Sigmoid colon (tissue), 7 donors: ENCODE measurements at regions of chr6 and their contacts with region 1.

Region 1: GRCh38 chr6:44096612-44097011 is 30.6 kb downstream of the MRPL14 start:
- DNase-seq: peak; percentile 87
- H3K4me3 ChIP-seq: no peak overlapping the region
- H3K27ac ChIP-seq: no peak overlapping the region
- H3K4me1 ChIP-seq: no peaks in the 10 kb centered on the region
- H3K27me3 ChIP-seq: no peaks in the 10 kb centered on the region
- CTCF ChIP-seq: peak; percentile 66 to 87 (median 80)
- EP300 ChIP-seq: no peak
- POLR2A ChIP-seq: no peak

Region 2: GRCh38 chr6:43496370-43497128 is 600.1 kb before region 1 on chr6:
- intact Hi-C with region 1: no loop called
- DNase-seq: no peak
- H3K4me3 ChIP-seq: no peak overlapping the region
- H3K27ac ChIP-seq: peak overlapping the region in 3 of 4 donors; percentile 41 to 45 (median 44)
- H3K4me1 ChIP-seq: peaks cover 0 to 51% (median 45%) of the 10 kb centered on the region in 4 donors
- H3K27me3 ChIP-seq: no peaks in the 10 kb centered on the region
- CTCF ChIP-seq: peak in 3 of 4 experiments; percentile 48 to 62 (median 60)
- EP300 ChIP-seq: no peak
- POLR2A ChIP-seq: no peak

Region 3: GRCh38 chr6:44151348-44152108 is 54.9 kb after region 1 on chr6:
- intact Hi-C with region 1: loop called (anchors 1 kb)
- DNase-seq: peak; percentile 85
- H3K4me3 ChIP-seq: no peak overlapping the region
- H3K27ac ChIP-seq: no peak overlapping the region
- H3K4me1 ChIP-seq: peaks cover 0 to 7% (median 2%) of the 10 kb centered on the region in 4 donors
- H3K27me3 ChIP-seq: no peaks in the 10 kb centered on the region
- CTCF ChIP-seq: peak; percentile 97 to 100 (median 98)
- EP300 ChIP-seq: no peak
- POLR2A ChIP-seq: no peak

Region 4: GRCh38 chr6:44237813-44238433 is 141.3 kb after region 1 on chr6:
- intact Hi-C with region 1: loop called (anchors 10 kb)
- DNase-seq: peak; percentile 91
- H3K4me3 ChIP-seq: peak overlapping the region; percentile 50 to 67 (median 62)
- H3K27ac ChIP-seq: peak overlapping the region; percentile 94 to 98 (median 97)
- H3K4me1 ChIP-seq: peaks cover 0 to 55% (median 50%) of the 10 kb centered on the region in 4 donors
- H3K27me3 ChIP-seq: no peaks in the 10 kb centered on the region
- CTCF ChIP-seq: peak; percentile 98 to 99 (median 98)
- EP300 ChIP-seq: peak in 1 of 4 donors; percentile 23
- POLR2A ChIP-seq: peak in 1 of 2 donors; percentile 24

Region 5: DNA sequence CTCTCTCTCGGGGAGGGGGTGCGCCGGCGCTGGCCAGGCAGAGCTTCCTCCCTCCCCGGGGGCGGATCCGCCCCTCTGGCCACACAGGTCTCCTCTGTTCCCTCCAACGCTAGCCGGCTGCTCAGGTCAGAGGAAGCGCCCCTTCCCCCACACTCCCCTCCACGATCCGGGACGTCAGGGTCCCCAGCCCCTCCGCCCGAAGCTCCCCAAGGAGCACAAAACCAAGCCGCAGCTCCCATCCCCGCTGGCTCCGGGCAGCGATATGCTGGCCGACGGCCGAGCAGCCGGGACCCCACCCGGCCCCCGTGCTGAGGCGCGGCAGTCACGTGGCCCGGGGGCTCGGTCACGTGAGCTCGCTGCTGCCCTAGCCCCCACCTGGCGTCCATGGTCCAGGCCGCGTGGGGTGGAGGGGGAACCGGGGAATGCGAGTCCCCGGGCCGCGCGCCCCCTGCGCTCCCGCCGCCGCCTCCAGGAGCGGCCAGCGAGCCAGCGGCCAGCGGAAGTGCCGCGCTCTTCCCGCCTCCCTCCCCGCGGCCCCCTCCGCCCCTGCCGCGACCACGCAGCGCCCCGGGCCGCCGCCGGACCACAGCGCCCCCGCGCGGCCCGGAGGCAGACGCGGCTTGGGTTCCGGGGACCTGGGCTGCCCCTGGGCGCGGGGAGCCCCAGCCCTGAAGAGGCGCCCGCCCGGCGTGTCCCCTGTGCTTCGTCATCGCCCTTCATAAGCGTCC is 160.6 kb after region 1 on chr6 and contains the start of gene SLC35B2:
- intact Hi-C with region 1: loop called (anchors 5 kb)
- DNase-seq: peak; percentile 84
- H3K4me3 ChIP-seq: peak within 1 kb of the TSS; percentile 76 to 94 (median 90)
- H3K27ac ChIP-seq: peak within 1 kb of the TSS; percentile 88 to 95 (median 92)
- H3K4me1 ChIP-seq: peaks cover 0 to 26% (median 19%) of the 10 kb centered on the region in 4 donors
- H3K27me3 ChIP-seq: no peaks in the 10 kb centered on the region
- CTCF ChIP-seq: peak in 2 of 4 experiments; percentile 4 to 76
- EP300 ChIP-seq: no peak
- POLR2A ChIP-seq: peak in 1 of 2 donors; percentile 28
- total RNA-seq, gene SLC35B2: 25.3 to 28.8 (median 27.2) TPM

Region 6: DNA sequence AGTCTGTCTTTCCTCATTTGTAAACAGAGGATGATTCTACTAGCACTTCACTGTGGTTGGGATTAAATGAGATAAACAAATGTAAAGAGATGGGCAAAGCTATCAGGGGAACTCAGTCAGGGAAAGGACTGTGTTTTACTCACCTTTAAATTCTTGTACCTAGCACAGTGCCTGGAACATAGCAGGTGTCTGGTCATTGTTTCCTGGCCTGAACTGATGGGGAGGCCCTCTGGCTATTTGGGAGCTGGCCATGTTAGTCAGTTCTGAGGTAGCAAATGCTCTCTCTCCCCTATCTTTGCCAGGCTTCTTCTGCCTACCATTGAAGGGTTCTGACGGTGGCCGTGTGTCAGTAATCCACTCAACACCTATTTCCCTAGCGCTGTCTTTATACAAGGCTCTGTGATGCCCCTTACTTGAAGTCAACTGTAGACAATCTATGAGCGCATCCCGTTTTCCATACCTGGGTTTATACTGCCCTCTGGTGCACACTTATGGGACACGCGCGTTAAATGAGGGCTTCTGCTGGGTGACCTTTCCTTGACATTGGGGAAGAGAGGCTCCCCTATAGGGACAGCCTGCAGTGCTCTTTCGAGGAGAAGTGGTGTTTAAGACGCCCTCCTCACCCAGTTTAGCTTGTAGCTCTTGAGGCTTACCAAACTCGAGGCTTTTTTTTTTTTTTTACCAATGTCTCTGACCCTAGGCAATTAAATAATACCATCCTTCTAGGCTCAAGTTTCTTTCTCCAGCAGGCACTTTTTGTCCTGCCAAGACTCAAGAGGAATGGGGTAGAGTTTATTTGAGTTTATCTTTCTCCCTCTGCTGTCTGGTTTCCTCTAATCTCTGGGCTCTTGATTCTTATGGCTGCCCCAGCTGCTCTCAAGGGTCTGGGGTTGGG is 241.9 kb after region 1 on chr6:
- intact Hi-C with region 1: loop called (anchors 10 kb)
- DNase-seq: no peak
- H3K4me3 ChIP-seq: no peak overlapping the region
- H3K27ac ChIP-seq: peak overlapping the region in 1 of 4 donors; percentile 54
- H3K4me1 ChIP-seq: peaks cover 0 to 7% (median 3%) of the 10 kb centered on the region in 4 donors
- H3K27me3 ChIP-seq: peaks cover 6 to 23% (median 14%) of the 10 kb centered on the region in 3 donors
- CTCF ChIP-seq: peak; percentile 50 to 67 (median 60)
- EP300 ChIP-seq: no peak
- POLR2A ChIP-seq: no peak

Region 7: GRCh38 chr6:44655412-44656342 is 559.1 kb after region 1 on chr6:
- intact Hi-C with region 1: no loop called
- DNase-seq: peak; percentile 93
- H3K4me3 ChIP-seq: no peak overlapping the region
- H3K27ac ChIP-seq: no peak overlapping the region
- H3K4me1 ChIP-seq: peaks cover 0 to 24% (median 16%) of the 10 kb centered on the region in 4 donors
- H3K27me3 ChIP-seq: no peaks in the 10 kb centered on the region
- CTCF ChIP-seq: peak; percentile 76 to 93 (median 90)
- EP300 ChIP-seq: peak in 2 of 4 donors; percentile 39 to 84
- POLR2A ChIP-seq: no peak